A673 (cell line): ENCODE measurements at regions of chr11 and their contacts with region 1.

Region 1: GRCh38 chr11:125568970-125569914 is at the start of gene EI24:
- DNase-seq: peak; percentile 98
- H3K4me3 ChIP-seq: peak within 1 kb of the TSS; percentile 92
- H3K27ac ChIP-seq: peak within 1 kb of the TSS; percentile 92
- H3K4me1 ChIP-seq: peaks cover 13% of the 10 kb centered on the region
- H3K27me3 ChIP-seq: no peaks in the 10 kb centered on the region
- CTCF ChIP-seq: peak; percentile 79
- total RNA-seq, gene EI24: 147 and 161 TPM in 2 replicates

Region 2: GRCh38 chr11:125315077-125315740 is 254.0 kb before region 1 on chr11:
- CTCF ChIA-PET with region 1: no interaction called
- POLR2A ChIA-PET with region 1: no interaction called
- intact Hi-C with region 1: no loop called
- DNase-seq: no peak
- H3K4me3 ChIP-seq: no peak overlapping the region
- H3K27ac ChIP-seq: no peak overlapping the region
- H3K4me1 ChIP-seq: no peaks in the 10 kb centered on the region
- H3K27me3 ChIP-seq: peaks cover 3% of the 10 kb centered on the region
- CTCF ChIP-seq: no peak

Region 3: GRCh38 chr11:125470355-125470754 is 98.9 kb before region 1 on chr11:
- CTCF ChIA-PET with region 1: no interaction called
- POLR2A ChIA-PET with region 1: no interaction called
- intact Hi-C with region 1: no loop called
- DNase-seq: no peak
- H3K4me3 ChIP-seq: no peak overlapping the region
- H3K27ac ChIP-seq: no peak overlapping the region
- H3K4me1 ChIP-seq: no peaks in the 10 kb centered on the region
- H3K27me3 ChIP-seq: peaks cover 6% of the 10 kb centered on the region
- CTCF ChIP-seq: no peak

Region 4: DNA sequence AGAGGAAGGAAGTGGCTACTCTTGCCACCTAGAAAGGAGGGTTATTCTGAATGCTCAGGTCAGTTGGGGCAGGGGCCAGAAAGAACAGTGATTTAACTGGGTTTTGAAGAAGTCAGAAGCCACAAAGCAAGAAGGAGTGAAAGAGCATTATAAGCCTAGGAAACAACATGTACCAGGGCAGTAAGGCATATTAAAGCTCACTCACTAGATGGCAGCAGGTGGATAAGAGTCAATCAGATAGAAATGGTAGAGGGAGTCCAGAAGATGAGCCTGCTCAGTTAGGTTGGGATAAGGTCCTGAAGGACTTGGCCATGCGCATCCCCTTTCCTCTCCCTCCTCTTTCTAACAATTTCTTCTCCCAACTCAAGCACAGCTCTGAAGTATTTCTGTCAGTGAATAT is 154.9 kb after region 1 on chr11:
- CTCF ChIA-PET with region 1: no interaction called
- POLR2A ChIA-PET with region 1: no interaction called
- intact Hi-C with region 1: no loop called
- DNase-seq: peak; percentile 40
- H3K4me3 ChIP-seq: no peak overlapping the region
- H3K27ac ChIP-seq: no peak overlapping the region
- H3K4me1 ChIP-seq: no peaks in the 10 kb centered on the region
- H3K27me3 ChIP-seq: peaks cover 46% of the 10 kb centered on the region
- CTCF ChIP-seq: peak; percentile 52

Region 5: GRCh38 chr11:125887373-125888324 is 318.4 kb after region 1 on chr11 and contains the start of gene HYLS1:
- CTCF ChIA-PET with region 1: no interaction called
- POLR2A ChIA-PET with region 1: no interaction called
- intact Hi-C with region 1: loop called (anchors 10 kb)
- DNase-seq: peak; percentile 96
- H3K4me3 ChIP-seq: peak within 1 kb of the TSS; percentile 84
- H3K27ac ChIP-seq: peak within 1 kb of the TSS; percentile 91
- H3K4me1 ChIP-seq: peaks cover 12% of the 10 kb centered on the region
- H3K27me3 ChIP-seq: no peaks in the 10 kb centered on the region
- CTCF ChIP-seq: 0 out of 2 replicates have a peak, but pooled peaks have one; percentile 26
- total RNA-seq, gene HYLS1: 16.3 and 18.8 TPM in 2 replicates